ENCODE measurements at regions of chr15 and their contacts with region 1.

Region 1: DNA sequence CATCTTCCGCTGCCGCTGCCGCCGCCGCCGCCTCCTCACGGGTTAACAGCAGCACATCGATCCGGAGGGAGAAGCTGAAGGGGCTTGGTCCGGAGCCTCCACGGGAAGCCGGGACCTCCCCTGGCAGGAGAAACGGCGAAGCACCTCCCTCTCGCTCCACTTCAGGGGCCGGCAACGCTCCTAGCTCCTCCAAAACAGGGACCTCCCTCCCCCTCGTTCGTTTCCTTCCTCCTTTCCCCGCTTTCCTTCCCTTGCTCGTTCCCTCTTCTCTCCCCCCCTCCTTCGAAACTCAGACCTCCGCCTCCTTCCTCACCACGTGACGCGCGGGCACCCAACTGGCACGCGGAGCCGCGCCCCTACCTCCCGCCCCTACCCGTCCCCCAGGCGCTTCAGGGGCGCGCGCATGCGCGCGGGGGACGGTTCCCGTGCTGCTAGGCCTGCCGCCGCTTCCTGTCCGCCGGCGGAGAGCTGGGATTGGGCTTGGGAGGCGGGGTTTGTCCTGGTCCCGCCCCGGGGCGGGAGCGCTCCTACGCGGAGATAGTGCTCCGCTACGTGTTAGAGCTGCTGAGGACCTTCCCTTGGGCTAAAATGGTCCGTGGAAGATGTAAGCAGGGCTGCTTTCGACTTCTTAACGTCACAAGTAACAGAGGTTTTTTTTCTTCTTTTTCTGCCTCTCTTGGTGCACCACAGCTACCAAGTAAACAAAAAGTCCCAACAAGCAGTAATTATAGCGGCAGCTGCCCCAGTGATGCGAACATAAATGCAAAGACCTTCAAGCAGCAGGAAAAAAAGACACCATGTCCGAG is at the start of gene ADAM10:
- DNase-seq: peak; percentile 84 to 98 (median 93)
- ATAC-seq: peak; percentile 96
- H3K4me3 ChIP-seq: peak within 1 kb of the TSS; percentile 66
- H3K4me3 Mint-ChIP-seq: peak within 1 kb of the TSS; percentile 89 to 99 (median 98)
- H3K27ac ChIP-seq: peak within 1 kb of the TSS; percentile 86
- H3K27ac Mint-ChIP-seq: peak within 1 kb of the TSS; percentile 85 to 96 (median 94)
- H3K4me1 ChIP-seq: peaks cover 17% of the 10 kb centered on the region in 2 donors
- H3K4me1 Mint-ChIP-seq: peaks cover 24 to 45% (median 42%) of the 10 kb centered on the region in 7 donors
- H3K27me3 ChIP-seq: no peaks in the 10 kb centered on the region
- H3K27me3 Mint-ChIP-seq: no peaks in the 10 kb centered on the region
- total RNA-seq, gene ADAM10: 119 to 170 (median 142) TPM

Region 2: GRCh38 chr15:58269455-58270414 is 480.0 kb before region 1 on chr15:
- CTCF ChIA-PET with region 1: no interaction called
- POLR2A ChIA-PET with region 1: no interaction called
- intact Hi-C with region 1: loop called (anchors 5 kb)
- DNase-seq: peak in 7 of 9 donors; percentile 13 to 56 (median 37)
- ATAC-seq: peak; percentile 81
- H3K4me3 ChIP-seq: no peak overlapping the region
- H3K4me3 Mint-ChIP-seq: no peak overlapping the region
- H3K27ac ChIP-seq: no peak overlapping the region
- H3K27ac Mint-ChIP-seq: peak overlapping the region in 5 of 9 donors; percentile 10 to 78 (median 52)
- H3K4me1 ChIP-seq: peaks cover 0 to 5% of the 10 kb centered on the region in 2 donors
- H3K4me1 Mint-ChIP-seq: peaks cover 6 to 14% (median 13%) of the 10 kb centered on the region in 7 donors
- H3K27me3 ChIP-seq: no peaks in the 10 kb centered on the region
- H3K27me3 Mint-ChIP-seq: peaks cover 0 to 6% (median 0%) of the 10 kb centered on the region in 5 donors

Region 3: GRCh38 chr15:58438956-58439355 is 310.8 kb before region 1 on chr15:
- CTCF ChIA-PET with region 1: no interaction called
- POLR2A ChIA-PET with region 1: no interaction called
- intact Hi-C with region 1: loop called (anchors 5 to 10 kb)
- DNase-seq: peak in 5 of 9 donors; percentile 13 to 46 (median 28)
- ATAC-seq: peak; percentile 62
- H3K4me3 ChIP-seq: no peak overlapping the region
- H3K4me3 Mint-ChIP-seq: no peak overlapping the region
- H3K27ac ChIP-seq: no peak overlapping the region
- H3K27ac Mint-ChIP-seq: peak overlapping the region in 3 of 9 donors; percentile 25 to 70 (median 49)
- H3K4me1 ChIP-seq: no peaks in the 10 kb centered on the region
- H3K4me1 Mint-ChIP-seq: peaks cover 0 to 33% (median 9%) of the 10 kb centered on the region in 7 donors
- H3K27me3 ChIP-seq: no peaks in the 10 kb centered on the region
- H3K27me3 Mint-ChIP-seq: no peaks in the 10 kb centered on the region

Region 4: GRCh38 chr15:58628206-58628947 is 121.4 kb before region 1 on chr15:
- CTCF ChIA-PET with region 1: no interaction called
- POLR2A ChIA-PET with region 1: interaction called, 3 read pairs
- intact Hi-C with region 1: loop called (anchors 2 to 5 kb)
- DNase-seq: peak in 6 of 9 donors; percentile 14 to 44 (median 21)
- ATAC-seq: peak; percentile 70
- H3K4me3 ChIP-seq: peak overlapping the region; percentile 67
- H3K4me3 Mint-ChIP-seq: peak overlapping the region; percentile 64 to 92 (median 87)
- H3K27ac ChIP-seq: peak overlapping the region; percentile 86
- H3K27ac Mint-ChIP-seq: peak overlapping the region; percentile 92 to 100 (median 96)
- H3K4me1 ChIP-seq: peaks cover 19% of the 10 kb centered on the region in 2 donors
- H3K4me1 Mint-ChIP-seq: peaks cover 32 to 67% (median 58%) of the 10 kb centered on the region in 7 donors
- H3K27me3 ChIP-seq: no peaks in the 10 kb centered on the region
- H3K27me3 Mint-ChIP-seq: no peaks in the 10 kb centered on the region

Region 5: DNA sequence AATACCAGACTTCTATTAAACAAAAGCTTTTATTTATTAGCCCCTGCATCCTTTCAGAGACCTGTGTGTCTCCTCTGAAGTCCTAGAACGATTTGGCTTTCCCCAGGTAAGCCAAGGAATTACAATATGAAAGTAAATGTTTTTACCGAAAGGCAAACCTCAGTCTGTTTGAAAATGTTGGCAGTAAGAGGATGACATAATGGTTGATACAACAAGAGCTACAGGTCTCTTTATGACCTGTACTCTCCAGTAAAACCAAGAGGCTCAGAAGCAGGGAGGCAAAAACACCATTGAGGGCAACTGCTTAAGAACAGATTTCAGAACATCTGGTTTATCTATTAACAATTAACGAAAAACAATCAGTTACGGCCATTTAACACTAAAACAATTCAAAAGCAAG is 108.1 kb before region 1 on chr15:
- CTCF ChIA-PET with region 1: no interaction called
- POLR2A ChIA-PET with region 1: no interaction called
- intact Hi-C with region 1: no loop called
- DNase-seq: no peak
- ATAC-seq: no peak
- H3K4me3 ChIP-seq: no peak overlapping the region
- H3K4me3 Mint-ChIP-seq: no peak overlapping the region
- H3K27ac ChIP-seq: no peak overlapping the region
- H3K27ac Mint-ChIP-seq: peak overlapping the region in 7 of 9 donors; percentile 24 to 78 (median 53)
- H3K4me1 ChIP-seq: no peaks in the 10 kb centered on the region
- H3K4me1 Mint-ChIP-seq: peaks cover 7 to 19% (median 17%) of the 10 kb centered on the region in 7 donors
- H3K27me3 ChIP-seq: no peaks in the 10 kb centered on the region
- H3K27me3 Mint-ChIP-seq: no peaks in the 10 kb centered on the region

Region 6: GRCh38 chr15:58704155-58704865 is 45.4 kb before region 1 on chr15:
- CTCF ChIA-PET with region 1: no interaction called
- POLR2A ChIA-PET with region 1: no interaction called
- intact Hi-C with region 1: loop called in 1 of 2 experiments (anchors 5 kb)
- DNase-seq: no peak
- ATAC-seq: no peak
- H3K4me3 ChIP-seq: no peak overlapping the region
- H3K4me3 Mint-ChIP-seq: no peak overlapping the region
- H3K27ac ChIP-seq: no peak overlapping the region
- H3K27ac Mint-ChIP-seq: peak overlapping the region in 3 of 9 donors; percentile 34 to 84 (median 69)
- H3K4me1 ChIP-seq: no peaks in the 10 kb centered on the region
- H3K4me1 Mint-ChIP-seq: peaks cover 43 to 88% (median 79%) of the 10 kb centered on the region in 7 donors
- H3K27me3 ChIP-seq: no peaks in the 10 kb centered on the region
- H3K27me3 Mint-ChIP-seq: no peaks in the 10 kb centered on the region

Region 7: DNA sequence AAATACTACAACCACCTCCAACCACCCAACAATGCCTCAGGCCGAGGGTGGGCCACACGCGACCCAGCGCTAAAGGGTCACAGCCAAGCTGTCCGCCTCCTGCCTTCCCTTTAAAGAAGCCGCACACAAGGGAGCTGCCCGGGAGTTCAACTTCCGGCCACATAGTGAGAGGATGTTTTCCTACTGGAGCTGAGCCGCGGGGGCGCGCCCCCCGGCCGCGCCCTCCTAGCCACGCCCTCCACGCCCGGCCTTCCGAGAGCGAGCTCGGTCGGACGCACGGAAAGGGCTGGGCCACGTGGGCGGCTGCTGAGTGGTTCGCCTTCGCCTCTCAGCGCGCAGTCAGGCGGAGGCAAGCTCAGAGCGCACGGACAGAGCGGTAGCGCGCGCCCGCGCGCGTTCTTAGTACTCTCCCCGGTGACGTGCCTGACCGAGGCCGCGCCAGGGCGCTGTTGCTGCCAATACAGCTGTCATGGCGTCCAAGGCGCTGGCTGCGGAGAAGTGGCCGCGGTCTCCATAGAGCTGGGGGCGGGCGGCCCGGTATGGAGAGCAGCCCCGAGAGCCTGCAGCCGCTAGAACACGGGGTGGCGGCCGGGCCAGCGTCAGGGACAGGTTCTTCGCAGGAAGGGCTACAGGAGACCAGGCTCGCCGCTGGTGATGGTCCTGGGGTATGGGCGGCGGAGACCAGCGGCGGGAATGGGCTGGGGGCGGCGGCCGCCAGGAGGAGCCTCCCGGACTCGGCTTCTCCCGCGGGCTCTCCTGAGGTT is 21.3 kb after region 1 on chr15 and contains the start of gene MINDY2:
- CTCF ChIA-PET with region 1: interaction called, 6 read pairs
- POLR2A ChIA-PET with region 1: interaction called, 40 read pairs
- intact Hi-C with region 1: loop called (anchors 1 kb)
- DNase-seq: peak; percentile 85 to 92 (median 90)
- ATAC-seq: peak; percentile 98
- H3K4me3 ChIP-seq: peak within 1 kb of the TSS; percentile 83
- H3K4me3 Mint-ChIP-seq: peak within 1 kb of the TSS in 2 of 10 donors; percentile 2 to 20
- H3K27ac ChIP-seq: peak within 1 kb of the TSS; percentile 90
- H3K27ac Mint-ChIP-seq: peak within 1 kb of the TSS in 7 of 9 donors; percentile 86 to 96 (median 93)
- H3K4me1 ChIP-seq: peaks cover 24 to 32% of the 10 kb centered on the region in 2 donors
- H3K4me1 Mint-ChIP-seq: peaks cover 0 to 21% (median 9%) of the 10 kb centered on the region in 7 donors
- H3K27me3 ChIP-seq: no peaks in the 10 kb centered on the region
- H3K27me3 Mint-ChIP-seq: no peaks in the 10 kb centered on the region
- total RNA-seq, gene MINDY2: 10.4 to 16.6 (median 11.5) TPM

Region 8: DNA sequence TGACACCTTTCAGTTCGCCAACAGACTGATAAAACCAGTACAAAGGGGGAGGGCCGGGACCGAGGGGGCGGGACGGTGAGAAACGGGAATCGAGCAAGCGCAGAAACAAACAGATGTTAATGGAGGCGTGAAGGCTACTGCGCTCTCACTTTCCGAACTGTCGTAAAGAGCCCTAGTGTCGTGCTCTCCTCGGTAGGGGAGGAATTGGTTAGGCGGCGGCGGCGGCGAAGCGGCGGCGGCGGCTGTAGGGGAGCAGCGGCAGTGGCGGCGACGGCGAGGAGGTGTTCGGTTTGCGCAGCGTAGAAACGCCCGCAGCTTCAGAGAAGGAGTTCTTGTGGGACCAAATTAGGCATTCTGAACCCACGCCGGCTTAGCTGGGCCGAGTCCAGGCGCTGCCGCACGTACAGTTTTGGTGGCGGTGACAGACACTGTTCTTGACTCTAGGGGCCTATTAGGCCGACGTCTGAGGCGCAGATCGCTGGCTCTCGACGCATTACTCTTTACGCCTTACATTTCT is 237.8 kb after region 1 on chr15 and contains the start of gene RNF111:
- CTCF ChIA-PET with region 1: interaction called, 3 read pairs
- POLR2A ChIA-PET with region 1: no interaction called
- intact Hi-C with region 1: loop called in 1 of 2 experiments (anchors 1 kb)
- DNase-seq: peak; percentile 66 to 94 (median 90)
- ATAC-seq: peak; percentile 98
- H3K4me3 ChIP-seq: peak within 1 kb of the TSS; percentile 83
- H3K4me3 Mint-ChIP-seq: peak within 1 kb of the TSS; percentile 89 to 100 (median 96)
- H3K27ac ChIP-seq: peak within 1 kb of the TSS; percentile 91
- H3K27ac Mint-ChIP-seq: peak within 1 kb of the TSS; percentile 87 to 96 (median 94)
- H3K4me1 ChIP-seq: peaks cover 17 to 25% of the 10 kb centered on the region in 2 donors
- H3K4me1 Mint-ChIP-seq: peaks cover 33 to 56% (median 53%) of the 10 kb centered on the region in 7 donors
- H3K27me3 ChIP-seq: no peaks in the 10 kb centered on the region
- H3K27me3 Mint-ChIP-seq: peaks cover 0 to 13% (median 0%) of the 10 kb centered on the region in 5 donors
- total RNA-seq, gene RNF111: 50.8 to 61.1 (median 57.9) TPM

Measured in naive thymus-derived CD4-positive, alpha-beta T cell (primary cell).